ENCODE measurements at regions of chr19 and their contacts with region 1.

Region 1: GRCh38 chr19:43619262-43620060 is at the start of gene ZNF428:
- DNase-seq: peak; percentile 67
- ATAC-seq: peak; percentile 95
- H3K4me3 ChIP-seq: peak within 1 kb of the TSS; percentile 82
- H3K27ac ChIP-seq: peak within 1 kb of the TSS; percentile 77
- H3K4me1 ChIP-seq: peaks cover 6% of the 10 kb centered on the region; the same call in 1 of the 2 replicates
- H3K27me3 ChIP-seq: no peaks in the 10 kb centered on the region
- CTCF ChIP-seq: no peak
- EP300 ChIP-seq: no peak
- POLR2A ChIP-seq: peak; percentile 87
- RAD21 ChIP-seq: no peak
- polyA plus RNA-seq, gene ZNF428: 0.27 to 0.38 TPM

Region 2: GRCh38 chr19:43575156-43575950 is 44.1 kb before region 1 on chr19 and contains the starts of genes PINLYP and XRCC1:
- CTCF ChIA-PET with region 1: no interaction called
- POLR2A ChIA-PET with region 1: no interaction called
- RAD21 ChIA-PET with region 1: no interaction called
- SMC1A ChIA-PET with region 1: no interaction called
- in situ Hi-C with region 1: no loop called
- intact Hi-C with region 1: loop called (anchors 1 kb)
- DNase-seq: peak; percentile 93
- ATAC-seq: peak; percentile 99
- H3K4me3 ChIP-seq: peak within 1 kb of the TSS; percentile 95
- H3K27ac ChIP-seq: peak within 1 kb of the TSS; percentile 78
- H3K4me1 ChIP-seq: peaks cover 5% of the 10 kb centered on the region
- H3K27me3 ChIP-seq: no peaks in the 10 kb centered on the region
- CTCF ChIP-seq: no peak
- EP300 ChIP-seq: no peak
- POLR2A ChIP-seq: peak; percentile 72
- RAD21 ChIP-seq: no peak
- polyA plus RNA-seq, gene PINLYP: 23.0 to 26.9 TPM
- polyA plus RNA-seq, gene XRCC1: 2.0 to 7.5 TPM

Measured in GM12878 (cell line).